ENCODE measurements at regions of chr11 and their contacts with region 1.

Region 1: DNA sequence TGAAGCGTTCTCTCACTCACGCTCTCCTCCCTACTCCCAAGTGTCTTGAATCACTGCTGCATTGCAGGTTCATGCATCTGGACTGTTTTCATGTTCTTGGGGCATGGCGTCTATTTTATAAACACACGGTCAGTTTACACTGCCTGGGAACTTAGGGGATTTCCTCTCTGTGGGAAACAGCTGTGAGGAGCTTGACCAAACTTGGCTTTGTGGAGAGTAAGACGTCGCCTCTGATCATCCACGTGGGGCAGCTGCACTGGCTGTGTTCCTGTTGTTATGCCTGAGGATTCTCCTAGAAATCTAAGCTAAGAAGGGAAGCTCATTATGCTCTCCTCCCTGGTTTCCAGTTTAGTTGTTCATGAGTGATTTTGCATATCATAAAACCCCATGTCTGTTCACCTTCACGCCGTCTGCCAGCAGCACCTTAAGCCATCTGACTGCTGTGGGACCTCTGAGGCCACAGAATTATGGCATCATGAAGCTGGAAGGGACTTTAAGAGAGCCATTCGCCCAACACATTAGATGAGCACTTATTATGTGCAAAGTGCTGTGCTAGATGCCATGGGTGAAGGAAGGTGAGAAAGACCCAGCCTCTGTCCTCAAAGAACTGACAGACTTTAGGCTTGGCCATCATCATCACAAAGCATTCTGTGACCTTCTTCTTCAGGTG is 38.8 kb upstream of the POU2AF1 start:
- DNase-seq: no peak
- ATAC-seq: peak; percentile 36 to 41
- H3K4me3 Mint-ChIP-seq: peak overlapping the region in 8 of 10 donors; percentile 22 to 84 (median 64)
- H3K27ac Mint-ChIP-seq: peak overlapping the region in 8 of 10 donors; percentile 9 to 90 (median 78)
- H3K4me1 Mint-ChIP-seq: peaks cover 17 to 84% (median 43%) of the 10 kb centered on the region in 4 donors
- H3K27me3 Mint-ChIP-seq: no peaks in the 10 kb centered on the region

Region 2: DNA sequence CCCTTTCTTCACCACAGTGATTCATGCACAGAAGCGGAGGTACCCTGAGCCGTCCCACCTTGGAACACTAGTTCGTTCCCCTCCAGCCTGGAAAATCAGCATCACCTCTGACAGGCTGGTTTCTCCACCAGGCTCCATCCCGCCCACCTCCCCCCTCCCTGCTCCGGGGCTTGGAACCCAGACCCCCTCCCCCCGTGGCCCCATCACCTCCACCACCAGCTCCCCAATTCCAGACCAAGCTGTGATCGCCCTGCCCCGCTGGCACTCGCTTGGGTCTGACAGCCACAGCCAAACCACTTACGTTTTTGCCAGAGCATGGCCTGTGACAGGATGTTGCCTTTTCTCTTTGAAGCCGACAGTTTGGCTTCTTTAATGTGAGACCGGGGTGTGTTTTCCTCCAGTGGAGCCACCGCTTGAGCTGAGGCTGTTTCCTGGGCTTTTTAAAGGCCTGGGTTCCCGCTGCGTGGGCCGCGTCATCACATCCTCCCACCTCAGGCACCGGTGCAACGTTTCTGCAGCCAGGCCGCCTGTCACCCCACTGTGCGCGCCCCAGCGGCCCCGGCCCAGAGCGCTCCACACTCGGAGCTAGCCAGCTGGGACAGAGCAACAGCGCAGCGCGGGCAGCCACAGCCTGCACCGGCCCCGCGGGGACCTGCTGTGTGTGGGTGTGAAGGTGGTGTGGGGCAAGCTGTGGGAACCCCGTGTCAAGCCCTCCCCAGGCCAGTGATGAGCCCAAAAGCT is 38.9 kb before region 1 on chr11 and contains the start of gene POU2AF1:
- POLR2A ChIA-PET with region 1: interaction called, 14 read pairs
- DNase-seq: peak; percentile 49 to 89 (median 71)
- ATAC-seq: peak; percentile 85 to 94
- H3K4me3 Mint-ChIP-seq: peak within 1 kb of the TSS; percentile 77 to 90 (median 82)
- H3K27ac Mint-ChIP-seq: peak within 1 kb of the TSS; percentile 93 to 97 (median 95)
- H3K4me1 Mint-ChIP-seq: peaks cover 15 to 73% (median 26%) of the 10 kb centered on the region in 4 donors
- H3K27me3 Mint-ChIP-seq: no peaks in the 10 kb centered on the region
- polyA plus RNA-seq, gene POU2AF1: 0.12 to 0.41 (median 0.24) TPM

Region 3: DNA sequence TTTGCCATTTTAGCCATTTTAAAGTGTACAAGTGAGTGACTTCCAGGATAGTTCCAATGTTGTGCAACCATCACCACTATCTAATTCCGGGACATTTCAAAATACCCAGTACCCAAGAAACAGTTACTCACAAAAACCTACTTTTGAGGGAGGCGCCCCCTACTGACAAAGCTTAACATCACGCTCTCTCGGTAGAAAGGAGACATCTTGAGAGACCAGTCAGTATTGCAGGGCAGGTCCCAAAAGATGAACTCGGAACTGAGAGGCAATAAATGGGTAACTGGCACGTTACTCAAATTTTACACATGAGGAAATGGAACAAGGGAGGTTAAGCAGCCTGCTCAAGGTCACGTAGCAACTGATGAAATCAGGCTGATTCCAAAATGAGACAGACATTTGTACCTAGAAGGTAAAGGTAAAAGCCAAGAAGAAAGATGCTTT is 11.2 kb after region 1 on chr11:
- POLR2A ChIA-PET with region 1: no interaction called
- DNase-seq: peak in 8 of 10 donors; percentile 25 to 73 (median 39)
- ATAC-seq: peak; percentile 33 to 38
- H3K4me3 Mint-ChIP-seq: no peak overlapping the region
- H3K27ac Mint-ChIP-seq: no peak overlapping the region
- H3K4me1 Mint-ChIP-seq: peaks cover 0 to 1% (median 0%) of the 10 kb centered on the region in 4 donors
- H3K27me3 Mint-ChIP-seq: peaks cover 0 to 7% (median 1%) of the 10 kb centered on the region in 5 donors